ENCODE measurements at regions of chr11 and their contacts with region 1.

Region 1: DNA sequence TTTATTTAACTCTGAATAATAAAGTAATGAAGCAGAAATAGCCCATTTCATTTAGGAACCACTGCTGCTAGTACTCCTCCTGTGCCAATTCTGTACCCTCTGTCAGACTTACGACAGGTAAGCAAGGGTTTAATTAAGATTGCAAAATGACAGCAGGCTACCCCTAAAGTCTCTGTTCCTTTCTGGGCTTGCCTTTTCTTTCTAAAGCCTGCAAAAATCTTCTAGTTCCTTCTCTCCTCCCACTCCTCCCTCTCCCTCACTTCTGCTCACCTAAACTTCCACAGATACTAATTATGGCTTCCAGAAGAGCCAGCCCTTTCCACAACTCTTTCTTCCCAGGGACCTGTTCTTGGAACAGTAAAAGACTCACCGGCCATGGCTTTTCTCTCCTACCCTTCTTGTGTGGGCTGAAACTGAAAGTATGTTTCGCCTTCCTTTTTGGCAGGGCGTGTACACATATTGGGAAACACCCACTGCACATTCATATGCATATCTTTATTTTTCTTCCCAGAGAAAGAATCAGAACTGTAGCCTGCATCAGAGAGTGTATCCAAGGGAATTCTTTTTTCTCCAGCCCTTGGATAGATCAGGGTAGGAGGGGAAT is at the start of gene CARD16:
- DNase-seq: no peak
- ATAC-seq: no peak
- H3K4me3 ChIP-seq: no peak within 1 kb of the TSS
- H3K27ac ChIP-seq: no peak within 1 kb of the TSS
- H3K4me1 ChIP-seq: peaks cover 62% of the 10 kb centered on the region
- H3K27me3 ChIP-seq: no peaks in the 10 kb centered on the region
- CTCF ChIP-seq: no peak
- EP300 ChIP-seq: no peak
- POLR2A ChIP-seq: no peak
- RAD21 ChIP-seq: no peak
- total RNA-seq, gene CARD16: 0.53 TPM in 1 of 2 replicates, not detected in the other

Region 2: DNA sequence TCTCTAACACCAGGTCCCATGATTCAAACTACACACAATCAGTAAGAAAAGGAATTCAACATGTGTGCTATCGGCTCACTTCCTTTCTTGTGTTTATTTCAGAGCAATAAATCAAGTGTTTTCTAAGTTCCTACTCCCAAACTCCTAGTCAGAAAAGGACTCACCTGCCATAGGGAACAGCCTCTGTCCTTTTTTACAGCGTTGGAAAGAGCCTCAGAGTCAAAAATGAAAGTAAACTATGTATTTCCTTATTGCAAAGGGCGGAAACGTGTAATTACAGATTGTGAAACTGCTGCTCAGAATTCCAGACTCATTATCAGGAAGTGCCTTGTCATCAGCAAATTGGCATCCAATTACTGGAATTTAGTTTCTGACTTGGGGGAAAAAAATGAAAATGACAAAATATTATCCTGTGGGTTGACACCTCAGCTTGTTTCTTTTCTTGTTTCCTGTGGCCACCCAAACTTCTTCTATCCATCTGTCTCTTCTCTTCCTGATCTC is 76.6 kb before region 1 on chr11 and contains the start of gene CASP4:
- CTCF ChIA-PET with region 1: no interaction called
- POLR2A ChIA-PET with region 1: interaction called, 6 read pairs
- in situ Hi-C with region 1: no loop called
- intact Hi-C with region 1: loop called (anchors 2 kb)
- DNase-seq: peak; percentile 56
- ATAC-seq: peak; percentile 52
- H3K4me3 ChIP-seq: peak within 1 kb of the TSS; percentile 67 to 84 (median 78)
- H3K27ac ChIP-seq: peak within 1 kb of the TSS; percentile 72
- H3K4me1 ChIP-seq: peaks cover 33% of the 10 kb centered on the region
- H3K27me3 ChIP-seq: no peaks in the 10 kb centered on the region; a peak in 1 of 5 replicates
- CTCF ChIP-seq: no peak
- EP300 ChIP-seq: peak in 1 of 2 experiments; percentile 23; a peak in 1 of 4 replicates
- POLR2A ChIP-seq: peak in 1 of 2 experiments; percentile 52; a peak in 2 of 4 replicates
- RAD21 ChIP-seq: no peak
- total RNA-seq, gene CASP4: 69.8 and 98.1 TPM in 2 replicates

Region 3: GRCh38 chr11:105027678-105028077 is 17.3 kb before region 1 on chr11:
- CTCF ChIA-PET with region 1: no interaction called
- POLR2A ChIA-PET with region 1: no interaction called
- in situ Hi-C with region 1: no loop called
- intact Hi-C with region 1: no loop called
- DNase-seq: no peak
- ATAC-seq: no peak
- H3K4me3 ChIP-seq: no peak overlapping the region
- H3K27ac ChIP-seq: no peak overlapping the region
- H3K4me1 ChIP-seq: no peaks in the 10 kb centered on the region
- H3K27me3 ChIP-seq: no peaks in the 10 kb centered on the region
- CTCF ChIP-seq: no peak
- EP300 ChIP-seq: no peak
- POLR2A ChIP-seq: no peak
- RAD21 ChIP-seq: no peak

Region 4: DNA sequence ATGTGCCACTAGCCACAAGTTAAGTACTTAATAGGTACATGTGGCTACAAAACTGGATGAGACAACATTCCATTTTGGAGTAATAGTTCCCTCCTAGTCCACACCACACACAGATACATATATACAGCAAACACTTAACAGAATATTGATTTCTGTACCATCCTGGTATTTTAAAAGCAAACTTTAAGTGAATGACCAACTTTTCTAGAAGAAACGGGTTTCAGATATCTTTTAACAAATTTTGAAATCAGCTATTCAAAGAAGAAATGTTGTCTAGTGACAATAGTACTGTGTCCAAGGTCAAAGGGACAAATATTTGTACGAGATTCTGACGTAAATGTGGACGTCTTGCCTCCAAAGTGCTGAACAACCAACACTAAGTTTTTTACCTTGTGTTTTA is 12.4 kb after region 1 on chr11:
- CTCF ChIA-PET with region 1: no interaction called
- POLR2A ChIA-PET with region 1: interaction called, 4 read pairs
- in situ Hi-C with region 1: no loop called
- intact Hi-C with region 1: loop called (anchors 1 kb)
- DNase-seq: peak; percentile 55
- ATAC-seq: peak; percentile 95
- H3K4me3 ChIP-seq: no peak overlapping the region
- H3K27ac ChIP-seq: peak overlapping the region; percentile 40
- H3K4me1 ChIP-seq: peaks cover 38% of the 10 kb centered on the region
- H3K27me3 ChIP-seq: no peaks in the 10 kb centered on the region
- CTCF ChIP-seq: no peak
- EP300 ChIP-seq: peak in 1 of 2 experiments; percentile 80; a peak in 2 of 4 replicates
- POLR2A ChIP-seq: no peak
- RAD21 ChIP-seq: no peak

Region 5: DNA sequence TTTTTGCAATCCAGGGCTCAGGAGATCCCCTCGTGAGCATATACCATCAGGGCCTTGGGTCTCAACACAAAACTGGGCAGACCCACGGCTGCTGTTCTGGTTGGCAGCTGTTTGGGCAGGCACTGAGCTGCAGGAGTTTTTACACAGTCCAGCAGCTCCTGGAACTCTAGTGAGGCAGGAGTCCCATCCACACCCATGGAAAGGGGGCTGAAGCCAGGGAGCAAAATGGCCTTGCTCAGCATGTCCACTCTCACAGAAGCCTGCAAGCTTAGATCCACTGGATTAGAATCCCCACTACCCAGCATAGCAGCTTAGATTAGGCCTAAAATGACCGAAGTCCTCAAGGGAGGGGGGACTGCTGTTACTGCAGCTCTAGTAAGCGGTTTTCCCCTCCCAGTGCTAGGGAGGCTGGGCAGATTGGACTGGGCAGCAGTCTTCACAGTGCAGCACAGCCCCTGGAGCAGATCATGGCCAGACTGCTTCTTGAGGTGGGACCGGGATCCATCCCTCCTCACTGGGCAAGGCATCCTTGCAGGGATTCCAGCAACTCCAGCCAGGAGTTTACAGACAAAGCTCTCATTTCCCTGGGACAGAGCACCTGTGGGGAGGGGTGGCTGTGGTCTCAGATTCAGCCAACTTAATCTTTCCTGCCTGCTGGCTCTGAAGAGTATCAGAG is 36.5 kb after region 1 on chr11:
- CTCF ChIA-PET with region 1: no interaction called
- POLR2A ChIA-PET with region 1: no interaction called
- in situ Hi-C with region 1: no loop called
- intact Hi-C with region 1: no loop called
- DNase-seq: no peak
- ATAC-seq: peak; percentile 59
- H3K4me3 ChIP-seq: no peak overlapping the region
- H3K27ac ChIP-seq: no peak overlapping the region
- H3K4me1 ChIP-seq: no peaks in the 10 kb centered on the region
- H3K27me3 ChIP-seq: no peaks in the 10 kb centered on the region
- CTCF ChIP-seq: no peak
- EP300 ChIP-seq: no peak
- POLR2A ChIP-seq: no peak
- RAD21 ChIP-seq: no peak

Region 6: DNA sequence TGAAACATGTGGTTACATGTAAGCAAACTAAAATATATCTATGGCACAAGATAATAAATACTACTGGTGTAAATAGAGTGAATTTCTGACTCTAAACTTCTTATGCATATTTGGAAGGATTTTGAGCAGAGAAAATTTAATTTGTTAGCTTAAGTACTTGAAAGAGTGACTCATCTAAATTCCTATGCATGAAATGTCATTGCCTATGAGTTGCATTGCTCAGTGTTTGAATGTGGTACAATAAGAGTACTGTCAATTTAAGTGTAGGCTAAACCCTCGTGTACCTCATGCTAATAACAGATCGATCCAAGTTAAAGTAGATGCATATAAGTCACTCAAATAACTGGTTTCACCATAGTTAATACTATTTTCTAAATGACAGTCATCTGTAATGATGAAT is 99.9 kb after region 1 on chr11:
- CTCF ChIA-PET with region 1: no interaction called
- POLR2A ChIA-PET with region 1: no interaction called
- in situ Hi-C with region 1: no loop called
- intact Hi-C with region 1: loop called (anchors 10 kb)
- DNase-seq: peak; percentile 62
- ATAC-seq: peak; percentile 67
- H3K4me3 ChIP-seq: no peak overlapping the region
- H3K27ac ChIP-seq: no peak overlapping the region
- H3K4me1 ChIP-seq: peaks cover 14% of the 10 kb centered on the region
- H3K27me3 ChIP-seq: no peaks in the 10 kb centered on the region; a peak in 1 of 5 replicates
- CTCF ChIP-seq: no peak
- EP300 ChIP-seq: no peak
- POLR2A ChIP-seq: no peak
- RAD21 ChIP-seq: no peak

Measured in HepG2 (cell line).